ENCODE measurements at regions of chr1 and their contacts with region 1.

Region 1: GRCh38 chr1:77779529-77780281 is at the start of gene MIGA1:
- DNase-seq: peak; percentile 69 to 96 (median 86)
- ATAC-seq: peak; percentile 97 to 98 (median 98)
- H3K4me3 ChIP-seq: peak within 1 kb of the TSS; percentile 76 to 90
- H3K4me3 Mint-ChIP-seq: peak within 1 kb of the TSS; percentile 93 to 98 (median 94)
- H3K27ac ChIP-seq: peak within 1 kb of the TSS; percentile 52
- H3K27ac Mint-ChIP-seq: peak within 1 kb of the TSS; percentile 82 to 85
- H3K4me1 ChIP-seq: peaks cover 8 to 16% of the 10 kb centered on the region in 2 experiments
- H3K4me1 Mint-ChIP-seq: peaks cover 43 to 46% (median 43%) of the 10 kb centered on the region in 3 donors
- H3K27me3 ChIP-seq: peaks cover 0 to under 1% of the 10 kb centered on the region in 2 experiments
- H3K27me3 Mint-ChIP-seq: no peaks in the 10 kb centered on the region
- total RNA-seq, gene MIGA1: 14.9 to 17.7 (median 16.1) TPM

Region 2: GRCh38 chr1:75985827-75986226 is 1793.9 kb before region 1 on chr1:
- CTCF ChIA-PET with region 1: no interaction called
- POLR2A ChIA-PET with region 1: no interaction called
- DNase-seq: no peak
- ATAC-seq: no peak
- H3K4me3 ChIP-seq: no peak overlapping the region
- H3K4me3 Mint-ChIP-seq: no peak overlapping the region
- H3K27ac ChIP-seq: no peak overlapping the region
- H3K27ac Mint-ChIP-seq: no peak overlapping the region
- H3K4me1 ChIP-seq: no peaks in the 10 kb centered on the region
- H3K4me1 Mint-ChIP-seq: no peaks in the 10 kb centered on the region
- H3K27me3 ChIP-seq: peaks cover 0 to 5% of the 10 kb centered on the region in 2 experiments
- H3K27me3 Mint-ChIP-seq: peaks cover 3 to 4% of the 10 kb centered on the region in 2 donors

Region 3: DNA sequence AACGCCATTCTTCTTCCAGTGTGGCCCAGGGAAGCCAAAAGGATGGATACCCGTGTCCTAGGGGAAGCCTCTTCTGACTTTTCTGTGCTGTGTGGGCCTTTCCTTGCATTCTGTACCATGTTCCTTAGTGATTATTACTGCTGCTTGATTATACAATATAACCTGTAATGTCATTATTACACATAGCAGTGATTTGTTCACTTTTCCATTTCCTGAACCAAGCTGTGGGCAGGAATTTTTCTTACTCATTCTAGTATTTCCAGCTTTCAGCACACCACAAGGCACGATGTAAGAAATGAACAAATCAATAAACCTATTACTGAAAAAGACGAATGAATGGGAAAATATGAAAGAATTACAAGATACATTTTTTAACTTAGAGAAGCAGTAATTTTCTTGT is 11.7 kb before region 1 on chr1:
- CTCF ChIA-PET with region 1: no interaction called
- POLR2A ChIA-PET with region 1: interaction called, 7 to 15 read pairs
- DNase-seq: no peak
- ATAC-seq: no peak
- H3K4me3 ChIP-seq: no peak overlapping the region
- H3K4me3 Mint-ChIP-seq: no peak overlapping the region
- H3K27ac ChIP-seq: no peak overlapping the region
- H3K27ac Mint-ChIP-seq: no peak overlapping the region
- H3K4me1 ChIP-seq: no peaks in the 10 kb centered on the region
- H3K4me1 Mint-ChIP-seq: no peaks in the 10 kb centered on the region
- H3K27me3 ChIP-seq: peaks cover 0 to 4% of the 10 kb centered on the region in 2 experiments
- H3K27me3 Mint-ChIP-seq: no peaks in the 10 kb centered on the region

Region 4: GRCh38 chr1:77857552-77857951 is 77.8 kb after region 1 on chr1:
- CTCF ChIA-PET with region 1: no interaction called
- POLR2A ChIA-PET with region 1: no interaction called
- DNase-seq: no peak
- ATAC-seq: no peak
- H3K4me3 ChIP-seq: no peak overlapping the region
- H3K4me3 Mint-ChIP-seq: no peak overlapping the region
- H3K27ac ChIP-seq: no peak overlapping the region
- H3K27ac Mint-ChIP-seq: no peak overlapping the region
- H3K4me1 ChIP-seq: no peaks in the 10 kb centered on the region
- H3K4me1 Mint-ChIP-seq: peaks cover 13 to 18% (median 17%) of the 10 kb centered on the region in 3 donors
- H3K27me3 ChIP-seq: no peaks in the 10 kb centered on the region
- H3K27me3 Mint-ChIP-seq: no peaks in the 10 kb centered on the region

Region 5: DNA sequence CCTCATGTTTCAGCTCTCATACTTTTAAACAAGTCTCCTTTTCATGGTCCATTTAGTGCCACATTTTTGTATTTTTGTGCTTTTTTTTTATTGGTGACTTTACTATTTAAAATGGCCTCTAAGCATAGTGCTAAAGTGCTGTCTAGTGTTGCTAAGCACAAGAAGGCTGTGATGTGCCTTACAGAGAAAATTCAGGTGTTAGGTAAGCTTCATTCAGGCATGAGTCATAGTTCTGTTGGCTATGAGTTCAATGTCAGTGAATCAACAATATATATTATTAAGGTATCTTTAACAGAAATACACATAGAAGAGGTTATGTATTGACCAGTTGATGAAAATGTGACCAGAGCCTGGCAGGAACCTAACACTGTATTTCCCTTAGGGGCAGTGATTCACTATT is 211.9 kb after region 1 on chr1:
- CTCF ChIA-PET with region 1: no interaction called
- POLR2A ChIA-PET with region 1: no interaction called
- DNase-seq: no peak
- ATAC-seq: no peak
- H3K4me3 ChIP-seq: no peak overlapping the region
- H3K4me3 Mint-ChIP-seq: no peak overlapping the region
- H3K27ac ChIP-seq: no peak overlapping the region
- H3K27ac Mint-ChIP-seq: no peak overlapping the region
- H3K4me1 ChIP-seq: no peaks in the 10 kb centered on the region
- H3K4me1 Mint-ChIP-seq: peaks cover 14 to 33% (median 19%) of the 10 kb centered on the region in 3 donors
- H3K27me3 ChIP-seq: no peaks in the 10 kb centered on the region
- H3K27me3 Mint-ChIP-seq: no peaks in the 10 kb centered on the region

Region 6: DNA sequence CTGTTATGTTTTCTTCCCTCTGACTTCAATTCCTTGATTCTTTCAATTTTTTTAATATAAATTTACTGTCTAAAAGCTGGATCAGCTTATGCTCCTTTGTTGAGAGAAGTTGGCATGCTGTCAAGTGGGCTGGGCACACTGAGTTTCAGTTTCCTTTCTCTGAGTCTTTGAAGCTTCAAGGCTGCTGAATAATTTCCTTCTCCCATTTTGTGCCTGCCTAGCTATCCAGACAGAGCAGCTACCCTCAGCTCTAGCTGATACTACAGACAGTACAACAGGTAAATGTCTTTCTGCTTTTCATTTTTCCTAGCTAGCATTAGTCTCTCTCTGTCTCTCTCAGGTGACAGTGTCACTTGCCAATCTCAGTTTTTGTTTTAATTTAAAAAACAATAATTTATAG is 869.9 kb after region 1 on chr1 and contains the start of gene IFI44:
- CTCF ChIA-PET with region 1: no interaction called
- POLR2A ChIA-PET with region 1: no interaction called
- DNase-seq: peak in 34 of 35 experiments; percentile 55 to 91 (median 72)
- ATAC-seq: peak; percentile 70 to 89 (median 76)
- H3K4me3 ChIP-seq: peak within 1 kb of the TSS; percentile 50 to 51
- H3K4me3 Mint-ChIP-seq: peak within 1 kb of the TSS; percentile 89 to 93 (median 92)
- H3K27ac ChIP-seq: peak within 1 kb of the TSS; percentile 66
- H3K27ac Mint-ChIP-seq: peak within 1 kb of the TSS; percentile 94 to 96
- H3K4me1 ChIP-seq: peaks cover 20 to 37% of the 10 kb centered on the region in 2 experiments
- H3K4me1 Mint-ChIP-seq: peaks cover 67 to 89% (median 77%) of the 10 kb centered on the region in 3 donors
- H3K27me3 ChIP-seq: no peaks in the 10 kb centered on the region
- H3K27me3 Mint-ChIP-seq: no peaks in the 10 kb centered on the region
- total RNA-seq, gene IFI44: 27.0 to 54.2 (median 38.1) TPM

Measured in T-cell (primary cell).